ENCODE measurements at regions of chr6 and their contacts with region 1.

Region 1: DNA sequence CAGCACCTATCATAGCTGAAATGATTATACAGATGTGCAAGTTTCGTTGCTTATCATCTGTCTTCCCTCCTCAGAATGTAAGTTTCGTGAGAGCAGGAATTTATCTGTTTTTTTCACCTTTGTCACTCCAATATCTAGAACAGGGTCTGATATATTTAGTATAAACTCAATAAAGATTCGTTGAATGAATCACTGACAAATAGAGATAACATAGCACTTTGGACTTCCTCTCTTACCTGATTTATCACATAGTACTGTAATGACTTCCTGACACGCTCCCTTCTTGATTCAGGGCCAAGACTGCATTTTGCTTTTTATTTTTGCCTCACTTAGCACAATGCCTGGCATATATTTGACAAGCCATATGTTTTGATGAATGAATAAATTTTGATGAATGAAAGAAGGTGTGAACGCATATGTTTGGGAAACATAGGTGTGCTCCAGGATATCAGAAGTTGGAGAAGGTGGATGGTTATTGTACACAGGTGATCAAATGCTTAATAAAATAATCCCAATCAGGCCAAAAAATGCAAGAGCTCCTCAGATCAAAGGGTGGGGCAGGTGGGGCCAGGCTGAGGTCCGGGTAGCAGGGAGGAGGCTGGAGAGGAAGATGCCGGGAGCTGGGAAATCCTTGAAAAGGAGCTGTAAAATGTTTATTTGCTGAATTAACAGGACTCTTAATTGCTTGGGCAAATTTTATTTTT is 33.0 kb downstream of the PIM1 start:
- DNase-seq: peak in 2 of 9 donors; percentile 17 to 24
- ATAC-seq: peak; percentile 61
- H3K4me3 ChIP-seq: peak overlapping the region; percentile 5
- H3K4me3 Mint-ChIP-seq: peak overlapping the region in 8 of 10 donors; percentile 1 to 64 (median 42)
- H3K27ac ChIP-seq: peak overlapping the region; percentile 2
- H3K27ac Mint-ChIP-seq: peak overlapping the region; percentile 30 to 90 (median 80)
- H3K4me1 ChIP-seq: peaks cover 29 to 37% of the 10 kb centered on the region in 2 donors
- H3K4me1 Mint-ChIP-seq: peaks cover 33 to 60% (median 51%) of the 10 kb centered on the region in 7 donors
- H3K27me3 ChIP-seq: no peaks in the 10 kb centered on the region
- H3K27me3 Mint-ChIP-seq: no peaks in the 10 kb centered on the region

Region 2: DNA sequence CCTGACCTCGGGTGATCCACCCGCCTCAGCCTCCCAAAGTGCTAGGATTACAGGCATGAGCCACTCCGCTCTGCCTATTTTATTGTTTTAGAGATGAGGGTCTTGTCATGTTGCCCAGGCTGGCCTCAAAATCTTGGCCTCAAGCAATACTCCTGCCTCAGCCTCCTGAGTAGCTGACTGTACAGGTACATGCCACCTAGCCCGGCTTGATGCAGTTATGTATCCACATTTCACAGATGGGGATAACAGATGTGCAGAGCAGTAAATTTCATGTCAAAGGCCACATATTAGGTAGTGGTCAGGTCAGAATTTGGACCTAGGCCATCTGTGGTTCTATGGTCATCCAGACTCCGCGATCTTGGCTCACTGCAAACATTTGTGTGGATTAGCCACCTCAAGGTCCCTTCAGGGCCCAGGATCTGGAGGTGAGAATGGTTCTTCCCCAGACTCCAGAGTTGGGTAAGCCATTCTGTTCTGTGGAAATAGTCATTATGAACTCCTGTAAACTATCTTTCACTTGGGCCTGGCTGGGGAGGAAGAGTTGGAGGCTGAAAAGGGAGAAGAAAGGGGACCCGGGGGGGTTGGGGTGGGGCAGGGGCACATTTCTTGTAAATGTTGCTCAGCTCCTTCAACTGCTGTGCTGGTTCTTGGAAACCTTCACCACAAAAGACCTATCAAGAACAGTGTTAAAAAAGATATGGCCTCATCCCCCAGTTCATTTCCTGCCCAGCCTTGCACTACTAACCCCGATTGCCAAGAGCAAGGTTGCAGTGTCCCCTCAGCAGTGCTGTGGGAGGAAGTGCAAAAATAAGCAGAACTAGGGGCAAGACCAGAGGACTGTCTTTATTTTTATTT is 20.0 kb before region 1 on chr6:
- CTCF ChIA-PET with region 1: interaction called, 41 read pairs
- POLR2A ChIA-PET with region 1: interaction called, 89 read pairs
- intact Hi-C with region 1: loop called (anchors 1 to 2 kb)
- DNase-seq: peak in 8 of 9 donors; percentile 56 to 85 (median 70)
- ATAC-seq: peak; percentile 97
- H3K4me3 ChIP-seq: peak overlapping the region; percentile 41
- H3K4me3 Mint-ChIP-seq: peak overlapping the region; percentile 62 to 86 (median 72)
- H3K27ac ChIP-seq: peak overlapping the region; percentile 73
- H3K27ac Mint-ChIP-seq: peak overlapping the region; percentile 88 to 98 (median 94)
- H3K4me1 ChIP-seq: peaks cover 44 to 61% of the 10 kb centered on the region in 2 donors
- H3K4me1 Mint-ChIP-seq: peaks cover 21 to 72% (median 63%) of the 10 kb centered on the region in 7 donors
- H3K27me3 ChIP-seq: no peaks in the 10 kb centered on the region
- H3K27me3 Mint-ChIP-seq: no peaks in the 10 kb centered on the region

Measured in naive thymus-derived CD4-positive, alpha-beta T cell (primary cell).